GM12878 (cell line): ENCODE measurements at regions of chr13 and their contacts with region 1.

Region 1: GRCh38 chr13:48580185-48580803 is 47.4 kb upstream of the RCBTB2 start:
- DNase-seq: no peak
- ATAC-seq: peak; percentile 46
- H3K4me3 ChIP-seq: no peak overlapping the region
- H3K27ac ChIP-seq: no peak overlapping the region; the same call in 1 of the 2 replicates
- H3K4me1 ChIP-seq: peaks cover 39% of the 10 kb centered on the region
- H3K27me3 ChIP-seq: no peaks in the 10 kb centered on the region
- CTCF ChIP-seq: peak; percentile 63 to 72 (median 64); a peak in 5 of 6 replicates
- EP300 ChIP-seq: no peak
- POLR2A ChIP-seq: no peak
- RAD21 ChIP-seq: peak; percentile 90

Region 2: GRCh38 chr13:48078251-48078656 is 502.0 kb before region 1 on chr13:
- CTCF ChIA-PET with region 1: interaction called, 23 read pairs
- POLR2A ChIA-PET with region 1: no interaction called
- RAD21 ChIA-PET with region 1: interaction called, 5 read pairs
- SMC1A ChIA-PET with region 1: interaction called, 4 read pairs
- in situ Hi-C with region 1: no loop called
- intact Hi-C with region 1: no loop called
- DNase-seq: peak; percentile 68
- ATAC-seq: peak; percentile 100
- H3K4me3 ChIP-seq: no peak overlapping the region
- H3K27ac ChIP-seq: peak overlapping the region; percentile 61
- H3K4me1 ChIP-seq: peaks cover 7% of the 10 kb centered on the region
- H3K27me3 ChIP-seq: no peaks in the 10 kb centered on the region
- CTCF ChIP-seq: peak; percentile 48 to 59 (median 57); a peak in 5 of 6 replicates
- EP300 ChIP-seq: peak in 1 of 2 experiments; percentile 22; a peak in 1 of 4 replicates
- POLR2A ChIP-seq: no peak
- RAD21 ChIP-seq: peak; percentile 40; the same call in 1 of the 2 replicates

Region 3: GRCh38 chr13:48291730-48292129 is 288.6 kb before region 1 on chr13:
- CTCF ChIA-PET with region 1: interaction called, 16 read pairs
- POLR2A ChIA-PET with region 1: no interaction called
- RAD21 ChIA-PET with region 1: interaction called, 7 read pairs
- SMC1A ChIA-PET with region 1: interaction called, 6 read pairs
- in situ Hi-C with region 1: loop called (anchors 5 kb)
- intact Hi-C with region 1: no loop called
- DNase-seq: no peak
- ATAC-seq: no peak
- H3K4me3 ChIP-seq: no peak overlapping the region
- H3K27ac ChIP-seq: no peak overlapping the region
- H3K4me1 ChIP-seq: peaks cover 5% of the 10 kb centered on the region
- H3K27me3 ChIP-seq: peaks cover 1 to 18% of the 10 kb centered on the region in 2 experiments; a peak in 3 of 4 replicates
- CTCF ChIP-seq: no peak
- EP300 ChIP-seq: no peak
- POLR2A ChIP-seq: no peak
- RAD21 ChIP-seq: no peak

Region 4: DNA sequence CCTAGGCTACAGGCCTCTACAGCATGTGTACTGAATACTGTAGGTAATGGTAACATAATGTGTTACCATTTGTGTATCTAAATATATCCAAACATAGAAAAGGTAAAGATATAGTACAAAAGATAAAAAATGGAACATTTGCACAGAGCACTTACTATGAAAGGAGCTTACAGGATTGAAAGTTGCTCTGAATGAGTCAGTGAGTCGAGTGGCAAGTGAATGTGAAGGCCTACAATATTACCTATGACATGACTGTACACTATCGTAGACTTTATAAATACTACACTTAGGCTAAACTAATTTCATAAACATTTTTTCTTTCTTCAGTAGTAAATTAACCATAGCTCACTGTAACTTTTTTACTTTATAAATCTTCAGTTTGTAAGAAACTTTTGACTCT is 202.4 kb before region 1 on chr13:
- CTCF ChIA-PET with region 1: interaction called, 6 read pairs
- POLR2A ChIA-PET with region 1: no interaction called
- RAD21 ChIA-PET with region 1: no interaction called
- SMC1A ChIA-PET with region 1: interaction called, 11 read pairs
- in situ Hi-C with region 1: no loop called
- intact Hi-C with region 1: no loop called
- DNase-seq: no peak
- ATAC-seq: no peak
- H3K4me3 ChIP-seq: no peak overlapping the region
- H3K27ac ChIP-seq: no peak overlapping the region
- H3K4me1 ChIP-seq: no peaks in the 10 kb centered on the region
- H3K27me3 ChIP-seq: no peaks in the 10 kb centered on the region
- CTCF ChIP-seq: no peak
- EP300 ChIP-seq: no peak
- POLR2A ChIP-seq: no peak
- RAD21 ChIP-seq: no peak

Region 5: GRCh38 chr13:48492470-48493065 is 87.7 kb before region 1 on chr13:
- CTCF ChIA-PET with region 1: interaction called, 12 read pairs
- POLR2A ChIA-PET with region 1: no interaction called
- RAD21 ChIA-PET with region 1: interaction called, 26 read pairs
- SMC1A ChIA-PET with region 1: interaction called, 9 read pairs
- in situ Hi-C with region 1: no loop called
- intact Hi-C with region 1: loop called (anchors 1 kb)
- DNase-seq: peak; percentile 98
- ATAC-seq: peak; percentile 88
- H3K4me3 ChIP-seq: peak overlapping the region; percentile 66; the same call in 1 of the 2 replicates
- H3K27ac ChIP-seq: peak overlapping the region; percentile 91
- H3K4me1 ChIP-seq: peaks cover 72% of the 10 kb centered on the region
- H3K27me3 ChIP-seq: no peaks in the 10 kb centered on the region
- CTCF ChIP-seq: no peak
- EP300 ChIP-seq: peak in 1 of 2 experiments; percentile 45; a peak in 1 of 4 replicates
- POLR2A ChIP-seq: peak; percentile 77
- RAD21 ChIP-seq: no peak

Region 6: DNA sequence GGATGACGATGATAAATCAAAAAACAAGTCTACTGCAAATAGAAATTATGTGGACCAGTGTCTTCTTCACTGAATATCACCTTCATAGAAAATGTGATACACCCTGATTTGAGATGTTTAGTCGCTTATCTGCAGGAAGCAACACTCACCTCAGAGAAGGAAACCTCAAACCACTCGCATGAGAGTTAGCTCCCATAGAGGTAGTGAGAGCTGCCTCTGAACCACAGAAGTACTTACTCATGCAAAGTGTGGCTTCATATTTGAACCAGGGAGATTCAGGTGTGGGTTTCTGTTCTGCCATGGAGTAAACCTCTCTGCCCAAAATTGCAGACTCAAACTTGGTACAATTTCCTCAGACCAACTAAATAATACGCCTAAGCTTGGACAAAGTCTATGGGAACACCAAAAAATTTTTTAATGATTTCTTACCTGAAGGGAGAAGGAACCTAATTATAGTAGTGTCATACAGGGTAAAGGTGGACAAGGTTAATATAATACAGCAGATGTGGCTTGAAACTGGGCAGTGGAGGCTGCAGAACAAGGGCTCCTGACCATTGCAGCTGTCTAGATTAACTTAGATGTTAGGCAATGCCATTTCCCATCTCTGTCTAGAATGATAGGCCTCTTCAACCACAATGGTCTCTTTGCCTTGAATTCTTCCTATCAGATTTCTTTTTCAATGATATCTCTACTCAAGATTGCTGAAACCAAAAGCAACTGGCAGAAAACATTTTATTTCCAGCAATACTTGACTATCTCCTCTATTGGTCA is 17.8 kb before region 1 on chr13:
- CTCF ChIA-PET with region 1: interaction called, 46 read pairs
- POLR2A ChIA-PET with region 1: interaction called, 14 read pairs
- RAD21 ChIA-PET with region 1: interaction called, 51 read pairs
- SMC1A ChIA-PET with region 1: interaction called, 103 read pairs
- in situ Hi-C with region 1: no loop called
- intact Hi-C with region 1: loop called (anchors 1 kb)
- DNase-seq: peak; percentile 98
- ATAC-seq: peak; percentile 99
- H3K4me3 ChIP-seq: peak overlapping the region; percentile 18; the same call in 1 of the 2 replicates
- H3K27ac ChIP-seq: peak overlapping the region; percentile 62
- H3K4me1 ChIP-seq: peaks cover 38% of the 10 kb centered on the region
- H3K27me3 ChIP-seq: no peaks in the 10 kb centered on the region
- CTCF ChIP-seq: no peak
- EP300 ChIP-seq: peak; percentile 84 to 96
- POLR2A ChIP-seq: no peak
- RAD21 ChIP-seq: 0 out of 2 replicates have a peak, but pooled peaks have one; percentile 4

Region 7: DNA sequence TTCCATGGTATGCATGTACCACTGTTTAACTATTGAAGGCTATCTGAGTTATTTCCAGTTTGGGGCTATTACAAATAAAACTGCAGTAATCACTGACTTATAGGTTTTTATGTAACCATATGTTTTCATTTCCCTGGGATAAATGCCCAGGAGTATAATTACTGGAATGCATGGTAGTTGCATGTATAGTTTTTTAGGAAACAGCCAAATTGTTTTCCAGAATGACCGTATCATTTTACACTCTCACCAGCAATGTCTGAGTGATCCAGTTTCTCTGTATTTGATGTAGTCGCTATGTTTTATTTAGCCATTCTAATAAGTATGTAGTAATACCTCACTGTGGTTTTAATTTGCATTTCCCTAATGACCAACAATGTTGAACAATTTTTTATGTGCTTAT is 115.5 kb after region 1 on chr13:
- CTCF ChIA-PET with region 1: no interaction called
- POLR2A ChIA-PET with region 1: no interaction called
- RAD21 ChIA-PET with region 1: no interaction called
- SMC1A ChIA-PET with region 1: no interaction called
- in situ Hi-C with region 1: no loop called
- intact Hi-C with region 1: no loop called
- DNase-seq: no peak
- ATAC-seq: no peak
- H3K4me3 ChIP-seq: no peak overlapping the region
- H3K27ac ChIP-seq: no peak overlapping the region
- H3K4me1 ChIP-seq: no peaks in the 10 kb centered on the region
- H3K27me3 ChIP-seq: no peaks in the 10 kb centered on the region
- CTCF ChIP-seq: no peak
- EP300 ChIP-seq: no peak
- POLR2A ChIP-seq: no peak
- RAD21 ChIP-seq: no peak